ENCODE measurements at regions of chr19 and their contacts with region 1.

Region 1: GRCh38 chr19:39412100-39412866 is at the start of gene PLEKHG2:
- DNase-seq: peak; percentile 100
- H3K4me3 ChIP-seq: peak within 1 kb of the TSS; percentile 63 to 93 (median 80)
- H3K27ac ChIP-seq: peak within 1 kb of the TSS; percentile 99 to 100 (median 100)
- H3K4me1 ChIP-seq: peaks cover 33 to 62% (median 56%) of the 10 kb centered on the region in 4 donors
- H3K27me3 ChIP-seq: no peaks in the 10 kb centered on the region
- CTCF ChIP-seq: peak; percentile 88 to 93 (median 91)
- EP300 ChIP-seq: no peak
- POLR2A ChIP-seq: peak; percentile 97
- total RNA-seq, gene PLEKHG2: 16.7 to 38.4 (median 22.2) TPM

Region 2: GRCh38 chr19:39325778-39326665 is 86.3 kb before region 1 on chr19:
- intact Hi-C with region 1: no loop called
- DNase-seq: no peak
- H3K4me3 ChIP-seq: no peak overlapping the region
- H3K27ac ChIP-seq: no peak overlapping the region
- H3K4me1 ChIP-seq: peaks cover 0 to 14% (median 8%) of the 10 kb centered on the region in 4 donors
- H3K27me3 ChIP-seq: peaks cover 0 to 11% (median 0%) of the 10 kb centered on the region in 4 donors
- CTCF ChIP-seq: no peak
- EP300 ChIP-seq: no peak
- POLR2A ChIP-seq: no peak

Region 3: DNA sequence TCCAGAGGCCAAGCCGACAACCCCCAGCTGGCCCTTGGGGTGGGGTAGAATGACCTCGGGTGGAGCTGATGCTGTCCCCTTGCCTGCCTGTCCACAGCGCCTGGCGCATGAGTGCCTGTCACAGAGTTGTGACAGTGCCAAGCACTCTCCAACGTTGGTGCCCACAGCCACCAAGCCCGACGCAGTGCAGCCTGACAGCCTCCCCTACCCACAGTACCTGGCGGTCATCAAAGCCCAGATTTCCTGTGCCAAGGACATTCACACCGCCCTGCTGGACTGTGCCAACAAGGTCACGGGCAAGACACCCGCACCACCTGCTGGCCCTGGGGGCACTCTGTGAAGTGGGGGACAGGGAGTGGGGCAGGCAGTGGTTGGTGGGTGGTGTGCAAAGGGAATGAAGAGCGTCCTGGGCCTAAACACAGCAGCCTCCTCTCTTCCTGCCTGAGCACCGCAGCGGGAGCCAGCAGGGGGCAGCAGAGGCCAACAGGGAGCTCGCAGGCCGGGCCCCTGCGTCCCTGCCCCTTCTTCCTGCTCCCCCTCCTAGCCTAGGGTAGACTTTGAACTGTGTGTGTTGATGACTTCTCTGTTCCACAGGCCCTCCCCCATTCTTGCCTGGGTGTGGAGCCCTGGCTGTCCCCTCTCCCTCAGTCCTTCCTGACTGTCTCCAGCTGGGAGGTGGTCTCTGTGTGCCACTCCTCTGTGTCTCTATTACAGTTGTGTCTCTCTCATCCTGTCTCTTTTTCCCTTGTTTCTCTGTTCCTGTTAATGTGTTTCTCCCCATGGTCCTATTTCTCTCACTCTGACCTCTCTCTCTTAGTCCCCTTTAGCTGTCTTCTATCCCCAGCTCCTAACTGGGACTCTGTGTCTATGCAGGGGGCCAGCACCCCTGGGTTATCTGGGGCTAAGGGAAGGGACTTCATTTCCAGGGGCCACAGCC is 14.7 kb before region 1 on chr19:
- intact Hi-C with region 1: loop called (anchors 1 kb)
- DNase-seq: peak; percentile 97
- H3K4me3 ChIP-seq: peak overlapping the region in 3 of 4 donors; percentile 1 to 23 (median 10)
- H3K27ac ChIP-seq: peak overlapping the region; percentile 88 to 100 (median 99)
- H3K4me1 ChIP-seq: peaks cover 34 to 58% (median 51%) of the 10 kb centered on the region in 4 donors
- H3K27me3 ChIP-seq: no peaks in the 10 kb centered on the region
- CTCF ChIP-seq: peak; percentile 98 to 99 (median 99)
- EP300 ChIP-seq: no peak
- POLR2A ChIP-seq: no peak

Region 4: DNA sequence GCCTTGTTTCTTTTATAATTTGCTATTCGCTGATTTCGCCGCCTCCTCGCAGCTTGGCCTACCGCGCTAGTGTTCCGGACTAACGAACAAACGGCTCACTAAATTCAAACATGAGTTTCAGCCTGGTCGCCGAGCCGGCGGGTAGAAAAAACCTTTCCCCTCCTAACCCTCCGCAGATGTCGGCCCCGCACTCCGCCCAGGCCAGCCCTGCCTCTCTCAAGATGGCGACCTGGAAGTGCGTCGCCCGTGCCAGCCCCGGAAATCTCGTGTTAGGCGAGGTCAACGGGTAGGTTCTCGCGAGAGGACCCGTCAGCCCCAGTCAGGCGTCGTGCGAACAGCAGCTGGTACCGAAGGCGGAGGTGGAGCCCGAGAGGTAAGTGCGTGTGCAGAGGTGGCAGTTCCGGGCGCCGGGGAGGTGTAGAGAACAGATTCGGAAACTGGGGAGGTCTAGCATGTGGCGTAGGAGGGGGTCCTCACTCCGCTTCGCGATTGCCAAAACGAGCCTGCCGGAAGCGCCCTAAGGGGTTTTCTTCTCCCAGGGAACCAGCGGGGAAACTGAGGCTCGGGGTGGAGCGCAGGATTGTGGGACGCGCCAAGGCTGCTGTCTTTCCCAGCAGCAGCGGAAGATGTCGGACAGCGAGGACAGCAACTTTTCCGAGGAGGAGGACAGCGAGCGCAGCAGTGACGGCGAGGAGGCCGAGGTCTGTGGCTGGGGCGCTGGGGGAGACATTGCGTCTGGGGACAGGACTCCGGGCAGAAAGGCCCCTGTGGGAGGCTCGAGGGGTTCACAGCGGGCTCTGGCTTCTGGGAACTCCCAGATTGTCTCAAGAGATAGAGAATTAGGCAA is 33.2 kb after region 1 on chr19 and contains the start of gene SUPT5H:
- intact Hi-C with region 1: loop called (anchors 2 kb)
- DNase-seq: peak; percentile 99
- H3K4me3 ChIP-seq: peak within 1 kb of the TSS; percentile 73 to 96 (median 90)
- H3K27ac ChIP-seq: peak within 1 kb of the TSS; percentile 91 to 96 (median 94)
- H3K4me1 ChIP-seq: peaks cover 43 to 63% (median 60%) of the 10 kb centered on the region in 4 donors
- H3K27me3 ChIP-seq: no peaks in the 10 kb centered on the region
- CTCF ChIP-seq: no peak
- EP300 ChIP-seq: no peak
- POLR2A ChIP-seq: peak; percentile 89
- total RNA-seq, gene SUPT5H: 87.6 to 101 (median 91.5) TPM

Measured in esophagus muscularis mucosa (tissue), 4 donors.